MCF 10A (cell line): ENCODE measurements at regions of chr11 and their contacts with region 1.

Region 1: DNA sequence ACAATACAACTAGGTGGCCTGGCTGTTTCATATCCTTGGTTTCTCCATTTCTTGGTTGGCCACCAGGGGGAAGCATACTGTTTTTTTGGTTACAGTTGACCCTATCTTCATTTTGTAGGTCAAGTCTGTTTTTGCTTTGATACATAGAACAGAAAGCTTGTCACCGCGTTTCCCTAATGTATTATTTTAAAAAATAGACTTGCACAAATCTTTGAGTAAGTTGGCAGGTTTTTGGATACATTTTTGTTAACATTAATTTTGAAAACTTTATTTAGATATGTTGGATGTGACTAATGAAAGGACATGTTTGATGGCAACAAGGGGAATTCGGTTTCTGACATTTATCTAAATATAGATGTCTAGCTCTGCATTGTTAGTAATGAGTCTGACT is 3.0 kb downstream of the NCR3LG1 start:
- DNase-seq: peak; percentile 82
- H3K4me3 Mint-ChIP-seq: peak overlapping the region; percentile 75
- H3K27ac Mint-ChIP-seq: peak overlapping the region; percentile 21
- H3K4me1 Mint-ChIP-seq: peaks cover 5% of the 10 kb centered on the region
- H3K27me3 Mint-ChIP-seq: no peaks in the 10 kb centered on the region
- CTCF ChIP-seq: peak; percentile 43

Region 2: GRCh38 chr11:17207317-17208258 is 147.0 kb before region 1 on chr11 and contains the start of gene PIK3C2A:
- CTCF ChIA-PET with region 1: interaction called, 3 read pairs
- POLR2A ChIA-PET with region 1: interaction called, 32 read pairs
- intact Hi-C with region 1: no loop called
- DNase-seq: peak; percentile 95
- H3K4me3 Mint-ChIP-seq: peak within 1 kb of the TSS; percentile 95
- H3K27ac Mint-ChIP-seq: peak within 1 kb of the TSS; percentile 99
- H3K4me1 Mint-ChIP-seq: peaks cover 30% of the 10 kb centered on the region
- H3K27me3 Mint-ChIP-seq: no peaks in the 10 kb centered on the region
- CTCF ChIP-seq: no peak
- total RNA-seq, gene PIK3C2A: 51.7 and 58.1 TPM in 2 replicates

Region 3: GRCh38 chr11:17276236-17277023 is 78.2 kb before region 1 on chr11 and contains the start of gene NUCB2:
- CTCF ChIA-PET with region 1: no interaction called
- POLR2A ChIA-PET with region 1: interaction called, 20 read pairs
- intact Hi-C with region 1: loop called (anchors 5 kb)
- DNase-seq: peak; percentile 96
- H3K4me3 Mint-ChIP-seq: peak within 1 kb of the TSS; percentile 98
- H3K27ac Mint-ChIP-seq: peak within 1 kb of the TSS; percentile 77
- H3K4me1 Mint-ChIP-seq: peaks cover 9% of the 10 kb centered on the region
- H3K27me3 Mint-ChIP-seq: no peaks in the 10 kb centered on the region
- CTCF ChIP-seq: no peak
- total RNA-seq, gene NUCB2: 89.4 and 137 TPM in 2 replicates

Region 4: GRCh38 chr11:17504330-17505107 is 149.9 kb after region 1 on chr11:
- CTCF ChIA-PET with region 1: interaction called, 12 read pairs
- POLR2A ChIA-PET with region 1: no interaction called
- intact Hi-C with region 1: no loop called
- DNase-seq: peak; percentile 74
- H3K4me3 Mint-ChIP-seq: no peak overlapping the region
- H3K27ac Mint-ChIP-seq: no peak overlapping the region
- H3K4me1 Mint-ChIP-seq: no peaks in the 10 kb centered on the region
- H3K27me3 Mint-ChIP-seq: peaks cover 45% of the 10 kb centered on the region
- CTCF ChIP-seq: peak; percentile 89

Region 5: GRCh38 chr11:17585911-17586695 is 231.5 kb after region 1 on chr11:
- CTCF ChIA-PET with region 1: no interaction called
- POLR2A ChIA-PET with region 1: no interaction called
- intact Hi-C with region 1: no loop called
- DNase-seq: no peak
- H3K4me3 Mint-ChIP-seq: no peak overlapping the region
- H3K27ac Mint-ChIP-seq: no peak overlapping the region
- H3K4me1 Mint-ChIP-seq: no peaks in the 10 kb centered on the region
- H3K27me3 Mint-ChIP-seq: peaks cover 27% of the 10 kb centered on the region
- CTCF ChIP-seq: no peak